B cell (primary cell): ENCODE measurements at regions of chr18 and their contacts with region 1.

Region 1: DNA sequence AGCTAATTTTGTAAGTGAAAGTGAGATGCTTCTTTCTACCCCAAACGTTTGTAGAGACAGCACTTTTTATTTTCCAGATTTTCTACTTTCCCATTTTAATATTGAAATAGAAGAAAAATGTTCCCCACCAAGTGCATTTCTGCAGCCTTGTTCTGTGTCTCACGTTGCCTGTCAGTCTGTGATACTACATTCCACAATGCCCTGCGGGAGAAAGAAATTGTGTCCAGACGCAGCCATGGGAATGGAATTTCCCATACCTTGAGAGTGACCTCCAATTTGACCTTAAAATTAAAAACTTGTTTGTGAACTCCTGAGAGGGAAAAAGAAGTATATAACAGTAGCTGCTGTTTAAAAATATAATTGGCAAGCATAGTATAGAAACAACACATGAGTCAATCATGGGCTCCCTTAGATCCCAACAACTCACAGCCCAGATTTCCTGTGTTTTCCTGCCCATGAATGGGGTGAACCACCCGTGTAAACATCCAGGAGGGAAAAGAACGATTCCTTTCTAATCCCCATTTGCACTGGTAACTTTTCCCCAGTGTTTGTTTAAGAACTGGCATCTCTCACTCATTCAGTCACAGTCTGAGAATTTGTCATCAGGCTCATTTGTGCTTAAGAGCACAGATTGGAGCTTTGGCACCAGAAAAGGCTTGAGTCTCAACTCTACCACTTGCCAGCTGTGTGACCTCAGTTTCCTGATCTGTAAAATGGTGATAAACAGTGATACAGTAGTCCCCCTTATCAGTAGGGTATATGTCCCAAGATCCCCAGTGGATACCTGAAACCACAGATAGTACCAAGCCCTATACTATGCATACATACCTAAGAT is 166.1 kb upstream of the ZNF521 start:
- DNase-seq: no peak
- ATAC-seq: peak; percentile 39
- H3K4me3 ChIP-seq: no peak overlapping the region
- H3K4me3 Mint-ChIP-seq: peak overlapping the region; percentile 44
- H3K27ac ChIP-seq: peak overlapping the region; percentile 56 to 77
- H3K27ac Mint-ChIP-seq: peak overlapping the region; percentile 86
- H3K4me1 ChIP-seq: peaks cover 22 to 26% of the 10 kb centered on the region in 2 donors
- H3K4me1 Mint-ChIP-seq: peaks cover 36% of the 10 kb centered on the region
- H3K27me3 ChIP-seq: no peaks in the 10 kb centered on the region
- H3K27me3 Mint-ChIP-seq: no peaks in the 10 kb centered on the region
- CTCF ChIP-seq: no peak

Region 2: GRCh38 chr18:25351777-25352628 is 166.1 kb before region 1 on chr18 and contains the start of gene ZNF521:
- CTCF ChIA-PET with region 1: no interaction called
- POLR2A ChIA-PET with region 1: no interaction called
- intact Hi-C with region 1: loop called (anchors 5 kb)
- DNase-seq: peak; percentile 77
- ATAC-seq: peak; percentile 85
- H3K4me3 ChIP-seq: peak within 1 kb of the TSS; percentile 53 to 73 (median 70)
- H3K4me3 Mint-ChIP-seq: peak within 1 kb of the TSS; percentile 85
- H3K27ac ChIP-seq: no peak within 1 kb of the TSS
- H3K27ac Mint-ChIP-seq: peak within 1 kb of the TSS; percentile 46
- H3K4me1 ChIP-seq: peaks cover 24 to 28% of the 10 kb centered on the region in 2 donors
- H3K4me1 Mint-ChIP-seq: peaks cover 16% of the 10 kb centered on the region
- H3K27me3 ChIP-seq: peaks cover 0 to 53% (median 41%) of the 10 kb centered on the region in 4 experiments
- H3K27me3 Mint-ChIP-seq: peaks cover 43% of the 10 kb centered on the region
- CTCF ChIP-seq: no peak
- total RNA-seq, gene ZNF521: 9.0 and 12.3 TPM in 2 replicates

Region 3: GRCh38 chr18:25365242-25365641 is 152.9 kb before region 1 on chr18:
- CTCF ChIA-PET with region 1: no interaction called
- POLR2A ChIA-PET with region 1: no interaction called
- intact Hi-C with region 1: no loop called
- DNase-seq: no peak
- ATAC-seq: no peak
- H3K4me3 ChIP-seq: no peak overlapping the region
- H3K4me3 Mint-ChIP-seq: no peak overlapping the region
- H3K27ac ChIP-seq: no peak overlapping the region
- H3K27ac Mint-ChIP-seq: no peak overlapping the region
- H3K4me1 ChIP-seq: no peaks in the 10 kb centered on the region
- H3K4me1 Mint-ChIP-seq: no peaks in the 10 kb centered on the region
- H3K27me3 ChIP-seq: no peaks in the 10 kb centered on the region
- H3K27me3 Mint-ChIP-seq: peaks cover 28% of the 10 kb centered on the region
- CTCF ChIP-seq: no peak

Region 4: DNA sequence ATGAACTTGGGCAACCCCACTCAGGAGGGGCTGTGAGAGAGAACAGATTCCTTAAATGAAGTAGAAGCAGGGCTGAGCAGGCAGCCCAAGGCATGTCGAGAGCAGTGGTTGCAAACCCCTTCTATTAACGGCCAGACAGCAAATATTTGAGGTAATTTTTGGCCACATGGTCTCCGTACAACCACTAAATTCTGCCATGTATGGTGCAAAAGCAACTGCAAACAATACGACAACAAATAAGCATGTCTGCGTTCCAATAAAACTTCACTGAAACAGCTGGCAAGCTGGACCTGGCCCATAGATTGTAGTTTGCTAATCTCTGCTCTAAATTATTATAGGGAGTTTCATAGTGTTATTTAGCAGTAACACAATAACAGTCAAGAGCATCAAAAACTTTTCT is 50.9 kb after region 1 on chr18:
- CTCF ChIA-PET with region 1: no interaction called
- POLR2A ChIA-PET with region 1: no interaction called
- intact Hi-C with region 1: loop called (anchors 10 kb)
- DNase-seq: no peak
- ATAC-seq: no peak
- H3K4me3 ChIP-seq: no peak overlapping the region
- H3K4me3 Mint-ChIP-seq: no peak overlapping the region
- H3K27ac ChIP-seq: no peak overlapping the region
- H3K27ac Mint-ChIP-seq: no peak overlapping the region
- H3K4me1 ChIP-seq: no peaks in the 10 kb centered on the region
- H3K4me1 Mint-ChIP-seq: no peaks in the 10 kb centered on the region
- H3K27me3 ChIP-seq: no peaks in the 10 kb centered on the region
- H3K27me3 Mint-ChIP-seq: no peaks in the 10 kb centered on the region
- CTCF ChIP-seq: no peak

Region 5: DNA sequence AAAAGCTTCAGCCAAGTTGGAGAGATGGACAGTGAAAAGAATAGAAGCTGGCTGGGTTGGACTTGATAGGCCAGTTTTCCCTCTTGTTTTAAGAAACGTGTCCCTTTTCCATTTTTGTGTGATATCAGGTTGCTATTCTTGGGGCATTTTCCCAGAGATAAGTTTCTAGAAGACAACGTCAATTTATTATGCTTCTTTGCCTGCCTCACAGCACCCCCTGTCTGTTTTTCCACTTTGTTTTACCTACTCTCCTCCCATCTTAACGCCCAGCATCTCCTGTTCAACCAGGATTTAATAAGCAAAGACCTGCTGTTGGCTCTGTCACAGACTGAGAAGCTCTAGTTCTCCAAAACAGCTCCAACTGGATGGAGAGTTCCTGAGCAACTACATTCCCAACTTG is 151.6 kb after region 1 on chr18:
- CTCF ChIA-PET with region 1: no interaction called
- POLR2A ChIA-PET with region 1: no interaction called
- intact Hi-C with region 1: no loop called
- DNase-seq: no peak
- ATAC-seq: no peak
- H3K4me3 ChIP-seq: no peak overlapping the region
- H3K4me3 Mint-ChIP-seq: no peak overlapping the region
- H3K27ac ChIP-seq: no peak overlapping the region
- H3K27ac Mint-ChIP-seq: no peak overlapping the region
- H3K4me1 ChIP-seq: no peaks in the 10 kb centered on the region
- H3K4me1 Mint-ChIP-seq: no peaks in the 10 kb centered on the region
- H3K27me3 ChIP-seq: peaks cover 0 to 2% (median 0%) of the 10 kb centered on the region in 4 experiments
- H3K27me3 Mint-ChIP-seq: peaks cover 7% of the 10 kb centered on the region
- CTCF ChIP-seq: no peak